WTC11 (cell line): ENCODE measurements at regions of chr13 and their contacts with region 1.

Region 1: GRCh38 chr13:46961719-46962118 is 64.9 kb upstream of the HTR2A start:
- DNase-seq: no peak
- ATAC-seq: no peak
- H3K4me3 Mint-ChIP-seq: no peak overlapping the region
- H3K27ac Mint-ChIP-seq: no peak overlapping the region
- H3K4me1 Mint-ChIP-seq: no peaks in the 10 kb centered on the region
- H3K27me3 Mint-ChIP-seq: no peaks in the 10 kb centered on the region
- CTCF ChIP-seq: no peak

Region 2: DNA sequence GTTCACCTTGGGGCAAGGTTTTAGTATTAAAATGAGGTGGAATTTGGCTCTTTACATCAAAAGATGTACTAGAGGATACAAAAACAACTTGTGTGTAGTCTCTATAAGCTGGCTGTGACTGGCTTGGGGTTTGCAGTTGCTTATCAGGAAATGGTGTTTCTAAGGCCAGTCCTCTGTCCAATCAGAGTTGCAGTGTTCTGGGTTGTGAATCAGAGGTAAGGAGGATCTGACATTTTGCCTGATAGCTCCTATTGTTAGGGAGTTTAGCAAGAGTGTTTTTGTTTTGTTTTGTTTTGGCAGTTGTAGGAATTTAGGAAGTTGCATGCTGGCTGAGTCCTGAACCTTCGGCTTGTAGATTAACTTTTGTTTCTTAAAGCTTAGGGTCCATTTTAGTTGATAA is 144.6 kb before region 1 on chr13:
- CTCF ChIA-PET with region 1: no interaction called
- POLR2A ChIA-PET with region 1: no interaction called
- DNase-seq: no peak
- ATAC-seq: peak; percentile 75
- H3K4me3 Mint-ChIP-seq: no peak overlapping the region
- H3K27ac Mint-ChIP-seq: no peak overlapping the region
- H3K4me1 Mint-ChIP-seq: peaks cover 12% of the 10 kb centered on the region
- H3K27me3 Mint-ChIP-seq: no peaks in the 10 kb centered on the region
- CTCF ChIP-seq: no peak

Region 3: DNA sequence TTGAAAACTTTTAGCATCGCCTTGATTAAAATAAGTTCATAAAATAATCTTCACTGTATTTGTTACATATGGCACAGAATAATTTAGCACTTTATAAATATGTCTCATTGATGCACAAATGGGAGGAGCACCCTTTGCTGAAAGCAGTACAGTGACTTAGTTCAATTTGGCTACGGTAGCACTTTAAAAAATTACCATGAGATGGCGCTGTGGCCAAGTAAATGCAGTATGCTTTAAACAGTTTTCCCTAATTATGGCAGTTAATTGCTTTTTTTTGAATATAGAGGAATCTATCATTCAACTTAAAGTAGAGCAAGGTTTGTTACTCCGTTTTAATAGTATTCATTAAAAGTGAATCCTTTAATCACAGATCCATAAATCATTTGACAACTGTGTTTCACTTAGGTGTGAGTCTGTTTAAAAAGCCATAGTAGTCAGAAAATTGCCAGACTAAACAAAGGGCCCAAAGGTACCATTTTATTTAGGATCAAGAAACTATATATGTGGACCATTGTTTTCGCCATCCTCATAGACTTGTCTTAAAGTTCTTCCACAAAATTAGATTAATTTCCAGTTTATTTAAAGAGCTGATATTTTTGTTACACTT is 130.0 kb before region 1 on chr13:
- CTCF ChIA-PET with region 1: interaction called, 12 read pairs
- POLR2A ChIA-PET with region 1: no interaction called
- DNase-seq: peak; percentile 44
- ATAC-seq: peak; percentile 62; the same call in 1 of the 2 replicates
- H3K4me3 Mint-ChIP-seq: no peak overlapping the region
- H3K27ac Mint-ChIP-seq: no peak overlapping the region
- H3K4me1 Mint-ChIP-seq: no peaks in the 10 kb centered on the region
- H3K27me3 Mint-ChIP-seq: no peaks in the 10 kb centered on the region
- CTCF ChIP-seq: peak; percentile 74

Region 4: GRCh38 chr13:46864941-46865340 is 96.8 kb before region 1 on chr13:
- CTCF ChIA-PET with region 1: no interaction called
- POLR2A ChIA-PET with region 1: no interaction called
- DNase-seq: no peak
- ATAC-seq: no peak
- H3K4me3 Mint-ChIP-seq: no peak overlapping the region
- H3K27ac Mint-ChIP-seq: no peak overlapping the region
- H3K4me1 Mint-ChIP-seq: peaks cover 4% of the 10 kb centered on the region; the same call in 1 of the 2 replicates
- H3K27me3 Mint-ChIP-seq: no peaks in the 10 kb centered on the region; the same call in 1 of the 2 replicates
- CTCF ChIP-seq: no peak

Region 5: GRCh38 chr13:47146991-47147811 is 185.5 kb after region 1 on chr13:
- CTCF ChIA-PET with region 1: no interaction called
- POLR2A ChIA-PET with region 1: no interaction called
- DNase-seq: no peak
- ATAC-seq: no peak
- H3K4me3 Mint-ChIP-seq: no peak overlapping the region
- H3K27ac Mint-ChIP-seq: no peak overlapping the region
- H3K4me1 Mint-ChIP-seq: peaks cover 12% of the 10 kb centered on the region
- H3K27me3 Mint-ChIP-seq: no peaks in the 10 kb centered on the region
- CTCF ChIP-seq: no peak